ENCODE measurements at regions of chr9 and their contacts with region 1.

Region 1: GRCh38 chr9:137223078-137223970 is 1.3 kb upstream of the RNF208 start:
- DNase-seq: peak; percentile 96
- H3K4me3 ChIP-seq: peak overlapping the region; percentile 65 to 74 (median 67)
- H3K27ac ChIP-seq: peak overlapping the region; percentile 59
- H3K4me1 ChIP-seq: peaks cover 58% of the 10 kb centered on the region
- H3K27me3 ChIP-seq: no peaks in the 10 kb centered on the region
- CTCF ChIP-seq: no peak

Region 2: DNA sequence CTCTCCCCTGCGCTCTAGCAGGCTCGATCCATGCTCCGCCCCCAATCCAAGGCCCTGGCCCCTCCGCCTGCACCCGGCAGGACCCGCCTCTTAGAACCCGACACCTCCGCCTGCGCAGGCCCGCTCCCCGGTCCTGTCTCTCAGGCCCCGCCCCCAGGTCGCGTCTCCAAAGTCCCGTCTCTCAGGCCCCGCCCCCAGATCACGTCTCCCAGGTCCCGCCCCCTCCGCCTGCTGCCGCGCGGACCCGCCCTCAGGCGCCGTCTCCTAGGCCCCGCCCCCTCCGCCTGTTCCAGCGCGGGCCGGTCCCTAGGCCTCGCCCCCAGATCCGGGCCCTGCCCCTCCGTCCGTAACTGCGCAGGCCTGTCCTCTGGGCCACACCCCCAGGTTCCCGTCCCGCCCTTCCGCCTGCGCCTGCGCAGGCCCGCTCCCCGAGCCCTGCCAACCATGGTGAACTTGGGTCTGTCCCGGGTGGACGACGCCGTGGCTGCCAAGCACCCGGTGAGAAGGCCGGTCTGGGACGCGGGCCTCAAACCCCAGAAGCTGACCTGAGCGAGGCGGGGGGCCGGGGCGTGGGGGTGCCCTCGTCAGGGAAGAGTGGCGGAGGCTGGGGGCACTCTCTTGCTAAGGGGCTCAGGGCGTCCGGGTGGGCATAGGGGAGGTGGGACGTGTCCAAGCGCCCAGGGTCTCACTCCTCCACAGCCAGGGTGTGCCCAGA is 432.2 kb before region 1 on chr9 and contains the start of gene TMEM141:
- CTCF ChIA-PET with region 1: no interaction called
- dilution Hi-C with region 1: no loop called
- in situ Hi-C with region 1: no loop called
- intact Hi-C with region 1: loop called (anchors 5 kb)
- DNase-seq: peak; percentile 98
- H3K4me3 ChIP-seq: peak within 1 kb of the TSS; percentile 72 to 93 (median 77)
- H3K27ac ChIP-seq: peak within 1 kb of the TSS; percentile 88
- H3K4me1 ChIP-seq: peaks cover 18% of the 10 kb centered on the region
- H3K27me3 ChIP-seq: no peaks in the 10 kb centered on the region
- CTCF ChIP-seq: no peak
- total RNA-seq, gene TMEM141: 38.8 to 95.4 TPM

Region 3: DNA sequence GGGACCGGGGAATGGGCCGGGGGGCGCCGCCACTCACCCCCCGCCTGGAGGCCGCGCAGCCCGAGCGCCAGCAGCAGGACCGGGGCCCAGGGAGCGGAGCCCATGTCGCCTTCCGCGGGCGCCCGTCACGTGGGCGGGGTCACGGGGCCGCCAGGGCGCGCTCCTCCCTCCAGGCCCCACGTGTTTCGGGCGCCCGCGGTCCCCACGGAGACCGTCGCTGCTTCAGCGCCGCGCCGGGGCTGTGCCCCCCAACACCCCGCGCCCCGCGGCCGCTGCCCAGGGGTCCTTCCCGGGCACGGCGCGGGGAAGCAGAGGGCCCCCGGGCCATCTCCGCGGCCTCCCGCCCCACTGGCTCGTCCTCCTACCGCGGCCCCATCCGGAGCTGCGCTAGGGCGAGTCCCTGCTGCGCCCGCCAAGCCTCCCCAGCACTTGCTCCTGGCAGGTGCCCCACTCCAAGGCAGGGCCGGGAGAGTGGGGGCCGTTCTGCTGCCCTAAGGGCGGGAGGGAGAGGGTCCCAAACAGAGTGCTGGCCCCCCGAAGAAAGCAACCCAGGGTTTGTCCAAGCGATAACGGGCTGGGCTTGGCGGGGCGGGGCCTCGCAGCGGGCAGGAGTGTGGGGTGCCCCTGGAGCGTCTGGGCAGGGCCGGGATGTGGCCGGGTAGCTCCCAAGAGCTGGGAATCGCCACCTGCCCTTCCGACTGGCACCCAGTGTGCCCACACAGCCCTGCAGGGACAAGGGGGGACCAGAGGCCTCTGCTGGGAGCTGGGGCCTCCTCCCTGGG is 108.5 kb before region 1 on chr9 and contains the start of gene DPP7:
- CTCF ChIA-PET with region 1: no interaction called
- dilution Hi-C with region 1: no loop called
- in situ Hi-C with region 1: no loop called
- intact Hi-C with region 1: loop called (anchors 1 kb)
- DNase-seq: peak; percentile 30
- H3K4me3 ChIP-seq: peak within 1 kb of the TSS; percentile 56 to 68 (median 58)
- H3K27ac ChIP-seq: no peak within 1 kb of the TSS
- H3K4me1 ChIP-seq: peaks cover 5% of the 10 kb centered on the region
- H3K27me3 ChIP-seq: no peaks in the 10 kb centered on the region
- CTCF ChIP-seq: no peak
- total RNA-seq, gene DPP7: 52.3 to 80.7 TPM

Region 4: GRCh38 chr9:137176302-137177182 is 46.8 kb before region 1 on chr9:
- CTCF ChIA-PET with region 1: no interaction called
- dilution Hi-C with region 1: loop called (anchors 5 kb)
- in situ Hi-C with region 1: no loop called
- intact Hi-C with region 1: no loop called
- DNase-seq: no peak
- H3K4me3 ChIP-seq: no peak overlapping the region
- H3K27ac ChIP-seq: no peak overlapping the region
- H3K4me1 ChIP-seq: peaks cover 6% of the 10 kb centered on the region
- H3K27me3 ChIP-seq: peaks cover 4% of the 10 kb centered on the region
- CTCF ChIP-seq: peak; percentile 68 to 71

Region 5: GRCh38 chr9:137200311-137201204 is 22.8 kb before region 1 on chr9 and contains the start of gene TPRN:
- CTCF ChIA-PET with region 1: no interaction called
- dilution Hi-C with region 1: no loop called
- in situ Hi-C with region 1: no loop called
- intact Hi-C with region 1: loop called (anchors 1 kb)
- DNase-seq: peak; percentile 98
- H3K4me3 ChIP-seq: peak within 1 kb of the TSS; percentile 32 to 73 (median 68)
- H3K27ac ChIP-seq: peak within 1 kb of the TSS; percentile 17
- H3K4me1 ChIP-seq: peaks cover 50% of the 10 kb centered on the region
- H3K27me3 ChIP-seq: no peaks in the 10 kb centered on the region
- CTCF ChIP-seq: no peak
- total RNA-seq, gene TPRN: 4.0 to 10.5 TPM

Region 6: DNA sequence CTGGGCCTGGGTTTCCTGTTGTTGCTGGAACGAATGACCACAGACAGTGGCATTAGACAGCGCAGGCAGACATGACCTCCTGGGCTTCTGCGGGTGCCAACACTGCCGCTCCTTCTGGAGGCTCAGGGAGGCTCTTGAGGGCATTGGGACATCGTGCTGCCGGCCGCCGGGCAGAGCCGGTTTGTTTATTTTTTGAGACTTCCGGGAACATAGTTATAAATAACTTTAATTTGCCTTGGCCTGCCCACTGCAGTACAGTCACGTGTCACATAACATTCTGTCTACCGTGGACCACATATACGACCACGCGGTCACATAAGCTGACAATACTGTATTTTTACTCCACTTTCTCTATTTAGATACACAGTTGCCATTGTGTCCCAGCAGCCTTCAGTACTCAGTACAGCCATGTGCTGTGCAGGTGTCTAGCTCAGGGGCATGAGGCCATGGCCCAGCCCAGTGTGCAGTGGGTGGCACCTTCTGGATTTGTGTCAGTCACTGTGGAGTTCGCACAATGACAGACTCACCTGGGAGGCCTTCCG is 46.0 kb after region 1 on chr9:
- CTCF ChIA-PET with region 1: no interaction called
- dilution Hi-C with region 1: loop called (anchors 5 kb)
- in situ Hi-C with region 1: no loop called
- intact Hi-C with region 1: no loop called
- DNase-seq: no peak
- H3K4me3 ChIP-seq: no peak overlapping the region
- H3K27ac ChIP-seq: no peak overlapping the region
- H3K4me1 ChIP-seq: peaks cover 14% of the 10 kb centered on the region
- H3K27me3 ChIP-seq: no peaks in the 10 kb centered on the region
- CTCF ChIP-seq: no peak

Measured in mammary epithelial cell (primary cell).